Activated T-helper 2 cell treated with anti-CD3 and anti-CD28 coated beads, Interferon-gamma antibody, Interleukin-2, Interleukin-4, amounts not matched to agents 10 μg/mL and 5 μg/mL and 100 μg/mL, durations not matched to agents 14 hours and 24 hours and 36 hours (primary cell): ENCODE measurements at regions of chr20 and their contacts with region 1.

Region 1: DNA sequence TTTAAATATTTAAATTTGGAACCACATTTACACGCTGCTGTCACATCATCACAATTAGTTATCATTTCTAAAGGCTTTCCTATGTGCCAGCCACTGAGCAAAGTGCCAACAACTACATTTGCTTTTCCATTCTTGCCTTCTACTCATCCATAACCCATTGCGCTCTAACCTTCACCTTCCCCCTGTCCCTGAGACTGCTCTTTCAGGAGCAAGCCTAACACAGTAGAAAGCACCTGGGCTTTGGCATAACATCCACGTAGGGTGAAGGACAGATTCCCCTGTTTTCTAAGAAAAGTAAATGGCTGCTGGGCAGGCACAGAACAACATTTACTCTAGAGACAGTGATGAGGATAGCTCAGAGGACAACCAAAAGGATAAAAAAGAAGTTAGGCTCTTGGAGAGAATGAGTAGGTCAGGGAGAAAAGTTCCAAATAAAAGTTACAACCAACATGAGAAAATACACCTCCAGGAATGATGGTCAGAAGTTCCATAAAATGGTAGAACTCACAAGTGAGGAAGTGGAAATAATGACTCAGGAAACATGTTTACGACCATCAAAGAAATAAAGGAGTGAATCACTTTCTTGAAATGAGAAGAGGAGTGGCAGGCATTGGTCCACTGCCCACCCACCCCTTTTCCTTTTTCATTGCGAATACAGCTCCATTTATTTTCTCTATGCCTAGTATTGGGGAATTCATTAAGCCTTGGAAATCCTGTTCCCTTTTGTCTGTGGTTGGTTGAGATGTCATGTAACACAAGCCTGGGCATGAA is 77.2 kb downstream of the PFDN4 start:
- DNase-seq: no peak
- H3K4me3 Mint-ChIP-seq: peak overlapping the region; percentile 66
- H3K27ac Mint-ChIP-seq: peak overlapping the region; percentile 89
- H3K4me1 Mint-ChIP-seq: peaks cover 17% of the 10 kb centered on the region
- H3K27me3 Mint-ChIP-seq: no peaks in the 10 kb centered on the region

Region 2: GRCh38 chr20:53773792-53774401 is 511.2 kb before region 1 on chr20:
- intact Hi-C with region 1: no loop called
- DNase-seq: no peak
- H3K4me3 Mint-ChIP-seq: no peak overlapping the region
- H3K27ac Mint-ChIP-seq: no peak overlapping the region
- H3K4me1 Mint-ChIP-seq: peaks cover 5% of the 10 kb centered on the region
- H3K27me3 Mint-ChIP-seq: no peaks in the 10 kb centered on the region

Region 3: DNA sequence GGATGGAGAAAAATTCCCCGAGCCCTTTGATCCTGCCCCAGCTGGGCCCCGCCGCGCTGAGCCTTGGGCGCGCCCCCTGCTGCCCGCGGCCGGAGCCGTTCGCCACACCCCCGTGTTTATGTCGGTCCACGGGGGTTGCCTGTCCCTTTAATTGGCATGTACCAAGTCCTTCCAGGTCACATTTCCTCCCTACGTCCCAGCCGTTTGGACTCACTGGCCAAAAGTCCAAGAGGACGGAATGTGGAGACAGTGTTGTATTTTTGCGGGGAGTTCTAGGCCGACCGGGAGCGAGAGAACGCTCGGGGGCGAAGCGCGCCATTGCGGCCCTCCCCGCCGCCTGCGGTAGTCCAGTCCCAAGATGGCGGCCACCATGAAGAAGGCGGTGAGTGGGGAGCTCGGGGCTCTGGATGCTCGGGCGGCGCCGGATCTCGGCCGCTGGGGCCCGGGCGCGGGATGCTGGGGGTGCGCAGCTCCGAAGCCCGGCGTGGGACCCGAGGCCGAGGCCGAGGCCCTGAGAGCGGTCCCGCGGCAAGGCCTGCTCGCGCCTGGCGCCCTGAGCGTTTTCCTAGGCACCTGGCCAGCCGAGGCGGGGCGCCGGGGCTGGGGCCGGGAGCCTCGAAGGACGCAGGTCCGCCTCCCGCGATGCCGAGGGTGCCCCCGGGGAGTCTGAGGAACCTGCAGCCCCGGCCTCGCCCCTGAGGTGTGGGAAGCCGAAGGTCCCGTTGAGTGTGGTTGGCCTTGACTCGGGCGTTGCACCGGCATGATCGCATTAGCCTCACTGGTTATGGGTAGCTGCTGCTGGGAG is 77.2 kb before region 1 on chr20 and contains the start of gene PFDN4:
- intact Hi-C with region 1: loop called (anchors 5 kb)
- DNase-seq: peak; percentile 78
- H3K4me3 Mint-ChIP-seq: peak within 1 kb of the TSS; percentile 94
- H3K27ac Mint-ChIP-seq: peak within 1 kb of the TSS; percentile 99
- H3K4me1 Mint-ChIP-seq: peaks cover 26% of the 10 kb centered on the region
- H3K27me3 Mint-ChIP-seq: no peaks in the 10 kb centered on the region
- total RNA-seq, gene PFDN4: 52.2 and 55.1 TPM in 2 replicates

Region 4: GRCh38 chr20:54219751-54220426 is 65.2 kb before region 1 on chr20:
- intact Hi-C with region 1: loop called (anchors 5 kb)
- DNase-seq: no peak
- H3K4me3 Mint-ChIP-seq: no peak overlapping the region
- H3K27ac Mint-ChIP-seq: no peak overlapping the region
- H3K4me1 Mint-ChIP-seq: peaks cover 16% of the 10 kb centered on the region
- H3K27me3 Mint-ChIP-seq: no peaks in the 10 kb centered on the region

Region 5: DNA sequence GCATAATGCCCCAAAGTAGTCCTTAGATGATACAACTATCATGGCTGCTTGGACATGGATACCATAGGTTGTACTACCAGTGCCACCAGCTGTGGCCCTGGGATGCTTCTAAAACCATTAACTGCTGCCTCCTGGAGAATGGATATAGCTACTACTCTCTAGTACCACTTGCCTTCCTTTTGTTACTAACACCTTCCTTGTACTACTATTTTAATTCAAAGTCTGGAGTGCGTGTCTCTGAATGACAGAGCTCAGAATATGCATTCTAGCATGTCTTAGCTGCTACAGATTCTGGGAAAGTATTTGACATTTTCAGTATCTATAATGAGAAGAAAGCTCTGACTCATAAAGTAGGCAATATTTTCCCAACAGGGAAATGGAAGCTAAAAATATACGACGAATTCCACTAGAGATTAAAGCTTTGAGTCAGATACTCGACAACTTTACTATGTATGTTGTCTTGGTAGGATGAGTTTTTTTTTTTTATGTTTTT is 35.0 kb after region 1 on chr20:
- intact Hi-C with region 1: loop called (anchors 5 kb)
- DNase-seq: no peak
- H3K4me3 Mint-ChIP-seq: no peak overlapping the region
- H3K27ac Mint-ChIP-seq: peak overlapping the region; percentile 26
- H3K4me1 Mint-ChIP-seq: peaks cover 11% of the 10 kb centered on the region
- H3K27me3 Mint-ChIP-seq: no peaks in the 10 kb centered on the region

Region 6: GRCh38 chr20:54350415-54350814 is 65.3 kb after region 1 on chr20:
- intact Hi-C with region 1: loop called (anchors 5 kb)
- DNase-seq: no peak
- H3K4me3 Mint-ChIP-seq: no peak overlapping the region
- H3K27ac Mint-ChIP-seq: peak overlapping the region; percentile 28
- H3K4me1 Mint-ChIP-seq: peaks cover 17% of the 10 kb centered on the region
- H3K27me3 Mint-ChIP-seq: no peaks in the 10 kb centered on the region